ENCODE measurements at regions of chrX and their contacts with region 1.

Region 1: DNA sequence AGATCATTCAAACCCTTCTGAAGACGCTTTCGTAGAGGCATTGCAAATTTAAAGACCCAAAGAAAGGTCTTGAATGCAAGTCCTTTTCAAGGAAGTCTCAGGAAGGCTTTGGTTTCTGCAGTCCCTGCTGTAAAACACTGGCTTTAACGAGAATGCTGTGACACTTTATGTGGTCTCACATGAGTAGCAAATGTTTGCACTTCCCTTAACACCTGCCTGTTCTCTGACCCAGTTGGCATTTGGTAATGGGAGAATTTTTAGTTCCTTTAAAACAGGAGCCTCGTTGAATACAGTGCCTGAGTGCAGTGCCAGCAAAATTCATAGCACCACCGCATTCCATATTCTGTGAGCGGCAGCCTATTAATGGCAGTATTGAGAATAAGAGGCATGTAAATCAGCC is 330.5 kb upstream of the PRKX start:
- DNase-seq: no peak
- H3K4me3 Mint-ChIP-seq: no peak overlapping the region
- H3K27ac Mint-ChIP-seq: no peak overlapping the region
- H3K4me1 Mint-ChIP-seq: no peaks in the 10 kb centered on the region
- H3K27me3 Mint-ChIP-seq: no peaks in the 10 kb centered on the region

Region 2: DNA sequence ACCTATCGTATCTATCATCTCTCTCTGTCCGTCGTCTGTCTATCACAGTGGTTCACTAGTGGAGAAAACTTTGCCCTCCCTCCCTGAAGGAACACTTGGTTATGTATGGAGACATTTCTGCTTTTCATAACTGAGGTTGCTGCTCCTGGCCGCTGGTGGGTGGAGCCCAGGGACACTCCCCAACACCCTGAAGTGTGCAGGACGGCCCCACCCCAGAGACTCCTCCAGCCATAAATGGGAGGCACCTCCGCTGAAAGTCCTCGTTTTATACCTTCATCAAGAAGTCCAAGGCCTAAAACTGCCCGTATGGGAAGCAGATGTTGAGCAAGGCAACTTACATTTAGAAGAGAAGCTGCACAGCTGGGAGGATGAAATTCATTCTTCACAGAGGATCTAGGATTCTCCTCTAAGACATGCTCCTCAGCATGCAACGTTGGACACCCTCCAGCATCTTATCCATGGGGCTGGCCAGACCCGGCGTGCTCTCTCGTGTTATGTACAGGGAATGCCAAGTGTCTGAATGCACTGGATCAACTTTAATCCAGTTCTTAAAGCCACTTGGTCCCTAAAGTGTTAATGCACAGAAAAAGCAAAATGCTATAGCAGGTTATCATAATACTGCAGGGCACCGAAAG is 374.0 kb before region 1 on chrX:
- intact Hi-C with region 1: no loop called
- DNase-seq: no peak
- H3K4me3 Mint-ChIP-seq: no peak overlapping the region
- H3K27ac Mint-ChIP-seq: no peak overlapping the region
- H3K4me1 Mint-ChIP-seq: peaks cover under 1% of the 10 kb centered on the region
- H3K27me3 Mint-ChIP-seq: no peaks in the 10 kb centered on the region

Region 3: DNA sequence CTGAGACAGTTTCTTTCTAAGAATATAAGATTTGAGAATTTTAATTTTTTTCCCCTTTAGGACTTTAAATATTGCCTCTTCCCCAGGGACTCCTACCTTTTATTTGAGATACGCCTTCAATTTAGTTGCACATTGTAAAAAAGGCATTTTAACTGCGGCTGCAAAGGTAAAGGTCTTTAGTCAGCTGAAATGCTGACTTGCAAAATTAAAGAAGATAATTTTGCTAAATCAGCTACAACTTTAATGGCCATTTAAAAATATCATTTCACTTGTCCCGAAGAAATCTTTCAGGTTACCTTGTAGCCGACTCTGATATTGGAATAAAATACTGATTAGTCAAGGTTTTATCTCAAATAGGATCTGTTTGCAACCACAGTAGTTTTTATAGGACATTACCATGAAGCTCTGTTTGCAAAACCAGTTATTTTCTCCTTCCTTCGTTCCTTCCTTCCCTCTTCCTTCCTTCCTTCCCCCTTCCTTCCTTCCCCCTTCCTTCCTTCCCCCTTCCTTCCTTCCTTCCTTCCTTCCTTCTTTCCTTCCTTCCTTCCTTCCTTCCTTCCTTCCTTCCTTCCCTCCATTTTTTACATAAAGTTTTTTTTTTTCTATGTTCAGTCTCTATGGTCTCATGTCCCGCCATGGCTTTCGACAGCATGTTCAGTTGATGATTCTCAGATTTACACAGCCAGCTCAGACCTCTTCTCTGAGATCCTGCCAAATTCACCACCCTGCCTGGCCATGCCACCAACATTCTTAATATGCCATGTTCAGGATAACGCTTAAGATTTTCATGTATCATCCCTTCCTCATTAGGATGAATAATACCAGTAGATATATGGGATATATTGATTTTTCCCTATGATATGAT is 74.9 kb after region 1 on chrX:
- intact Hi-C with region 1: loop called (anchors 2 kb)
- DNase-seq: no peak
- H3K4me3 Mint-ChIP-seq: no peak overlapping the region
- H3K27ac Mint-ChIP-seq: no peak overlapping the region
- H3K4me1 Mint-ChIP-seq: no peaks in the 10 kb centered on the region
- H3K27me3 Mint-ChIP-seq: no peaks in the 10 kb centered on the region

Measured in activated T-helper 1 cell treated with anti-CD3 and anti-CD28 coated beads, Interleukin-12 subunit alpha, Interleukin-12 subunit beta, Interleukin-2, Interleukin-4 antibody, amounts not matched to agents 30 ng/mL and 10 ng/mL and 1 ng/mL, durations not matched to agents 14 hours and 24 hours and 36 hours (primary cell).